ENCODE measurements at regions of chr5 and their contacts with region 1.

Region 1: GRCh38 chr5:88666761-88667495 is 216.1 kb downstream of the MEF2C start:
- DNase-seq: peak; percentile 66 to 97
- H3K4me3 ChIP-seq: peak overlapping the region; percentile 32
- H3K4me1 ChIP-seq: peaks cover 64% of the 10 kb centered on the region
- H3K27me3 ChIP-seq: no peaks in the 10 kb centered on the region

Region 2: GRCh38 chr5:88398316-88398715 is 268.6 kb before region 1 on chr5:
- in situ Hi-C with region 1: loop called (anchors 5 kb)
- DNase-seq: peak; percentile 31 to 45
- H3K4me3 ChIP-seq: no peak overlapping the region
- H3K4me1 ChIP-seq: peaks cover 67% of the 10 kb centered on the region
- H3K27me3 ChIP-seq: no peaks in the 10 kb centered on the region